GM23248 (cell line): ENCODE measurements at regions of chr1 and their contacts with region 1.

Region 1: DNA sequence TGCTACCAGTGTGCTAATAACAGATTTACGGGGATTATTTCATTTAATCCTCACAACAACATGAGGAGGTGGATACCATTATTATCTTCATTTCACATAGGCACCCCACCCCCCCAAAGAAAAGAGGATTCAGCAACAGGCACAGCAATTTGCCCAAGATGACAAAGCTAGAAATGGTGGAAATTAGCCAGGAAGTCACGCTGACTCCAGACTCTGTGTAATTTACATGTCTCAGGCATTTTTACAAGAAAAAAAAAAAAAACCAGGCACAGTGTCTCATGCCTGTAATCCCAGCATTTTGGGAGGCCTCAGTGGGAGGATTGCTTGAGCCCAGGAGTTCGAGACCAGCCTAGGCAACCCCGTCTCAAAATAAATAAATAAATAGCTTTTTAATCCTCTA is 37.5 kb upstream of the PRDM2 start:
- DNase-seq: peak; percentile 91
- H3K4me3 ChIP-seq: no peak overlapping the region
- H3K27ac ChIP-seq: peak overlapping the region; percentile 24
- H3K4me1 ChIP-seq: peaks cover 12% of the 10 kb centered on the region
- H3K27me3 ChIP-seq: no peaks in the 10 kb centered on the region

Region 2: DNA sequence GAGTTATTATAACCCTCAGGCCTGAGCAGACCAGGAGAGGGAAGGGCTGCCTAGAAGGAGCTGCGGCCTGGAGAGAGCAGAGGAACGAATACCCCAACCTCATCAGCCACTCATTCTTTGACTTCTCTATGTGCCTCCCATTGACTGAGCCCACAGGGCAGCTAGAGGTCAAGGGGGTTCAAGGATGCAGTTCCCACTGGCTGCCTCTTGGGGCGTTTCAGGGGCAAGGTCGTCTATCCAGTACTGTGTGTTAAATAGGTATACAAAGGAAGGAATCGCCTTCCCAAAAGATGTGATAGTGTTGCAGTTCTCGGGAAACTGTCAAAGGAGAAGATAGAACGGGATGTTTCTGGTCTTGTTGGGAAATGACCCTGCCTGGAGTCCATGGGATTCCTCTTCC is 288.1 kb after region 1 on chr1:
- in situ Hi-C with region 1: loop called (anchors 10 kb)
- DNase-seq: no peak
- H3K4me3 ChIP-seq: no peak overlapping the region
- H3K27ac ChIP-seq: no peak overlapping the region
- H3K4me1 ChIP-seq: peaks cover 8% of the 10 kb centered on the region
- H3K27me3 ChIP-seq: no peaks in the 10 kb centered on the region